CD4-positive, alpha-beta memory T cell (primary cell): ENCODE measurements at regions of chr17 and their contacts with region 1.

Region 1: GRCh38 chr17:57243171-57243948 is 13.0 kb upstream of the MSI2 start:
- DNase-seq: peak; percentile 71 to 75 (median 72)
- H3K4me3 ChIP-seq: no peak overlapping the region
- H3K4me3 Mint-ChIP-seq: no peak overlapping the region
- H3K27ac ChIP-seq: no peak overlapping the region
- H3K27ac Mint-ChIP-seq: peak overlapping the region in 1 of 7 donors; percentile 51
- H3K4me1 ChIP-seq: peaks cover 3% of the 10 kb centered on the region
- H3K4me1 Mint-ChIP-seq: peaks cover 0 to 7% (median 0%) of the 10 kb centered on the region in 4 donors
- H3K27me3 ChIP-seq: no peaks in the 10 kb centered on the region
- H3K27me3 Mint-ChIP-seq: peaks cover 3 to 7% of the 10 kb centered on the region in 2 donors

Region 2: GRCh38 chr17:57228911-57229310 is 14.4 kb before region 1 on chr17:
- CTCF ChIA-PET with region 1: interaction called, 11 read pairs
- POLR2A ChIA-PET with region 1: no interaction called
- intact Hi-C with region 1: no loop called
- DNase-seq: no peak
- H3K4me3 ChIP-seq: no peak overlapping the region
- H3K4me3 Mint-ChIP-seq: no peak overlapping the region
- H3K27ac ChIP-seq: no peak overlapping the region
- H3K27ac Mint-ChIP-seq: no peak overlapping the region
- H3K4me1 ChIP-seq: no peaks in the 10 kb centered on the region
- H3K4me1 Mint-ChIP-seq: no peaks in the 10 kb centered on the region
- H3K27me3 ChIP-seq: no peaks in the 10 kb centered on the region
- H3K27me3 Mint-ChIP-seq: peaks cover 11 to 16% of the 10 kb centered on the region in 2 donors

Region 3: GRCh38 chr17:57284984-57285646 is 41.8 kb after region 1 on chr17:
- CTCF ChIA-PET with region 1: interaction called, 31 read pairs
- POLR2A ChIA-PET with region 1: no interaction called
- intact Hi-C with region 1: loop called (anchors 10 kb)
- DNase-seq: peak; percentile 16 to 68 (median 28)
- H3K4me3 ChIP-seq: peak overlapping the region in 1 of 2 donors; percentile 3
- H3K4me3 Mint-ChIP-seq: peak overlapping the region; percentile 53 to 85 (median 74)
- H3K27ac ChIP-seq: peak overlapping the region; percentile 38
- H3K27ac Mint-ChIP-seq: peak overlapping the region; percentile 66 to 95 (median 90)
- H3K4me1 ChIP-seq: peaks cover 60% of the 10 kb centered on the region
- H3K4me1 Mint-ChIP-seq: peaks cover 50 to 81% (median 65%) of the 10 kb centered on the region in 4 donors
- H3K27me3 ChIP-seq: no peaks in the 10 kb centered on the region
- H3K27me3 Mint-ChIP-seq: no peaks in the 10 kb centered on the region

Region 4: GRCh38 chr17:57518587-57519581 is 275.5 kb after region 1 on chr17:
- CTCF ChIA-PET with region 1: interaction called, 4 read pairs
- POLR2A ChIA-PET with region 1: no interaction called
- intact Hi-C with region 1: loop called (anchors 10 kb)
- DNase-seq: no peak
- H3K4me3 ChIP-seq: no peak overlapping the region
- H3K4me3 Mint-ChIP-seq: no peak overlapping the region
- H3K27ac ChIP-seq: no peak overlapping the region
- H3K27ac Mint-ChIP-seq: no peak overlapping the region
- H3K4me1 ChIP-seq: no peaks in the 10 kb centered on the region
- H3K4me1 Mint-ChIP-seq: peaks cover 6 to 19% (median 15%) of the 10 kb centered on the region in 4 donors
- H3K27me3 ChIP-seq: no peaks in the 10 kb centered on the region
- H3K27me3 Mint-ChIP-seq: no peaks in the 10 kb centered on the region

Region 5: GRCh38 chr17:57747221-57748017 is 504.1 kb after region 1 on chr17:
- CTCF ChIA-PET with region 1: interaction called, 48 read pairs
- POLR2A ChIA-PET with region 1: no interaction called
- intact Hi-C with region 1: loop called (anchors 1 kb)
- DNase-seq: peak; percentile 45 to 57 (median 49)
- H3K4me3 ChIP-seq: no peak overlapping the region
- H3K4me3 Mint-ChIP-seq: no peak overlapping the region
- H3K27ac ChIP-seq: no peak overlapping the region
- H3K27ac Mint-ChIP-seq: peak overlapping the region in 1 of 7 donors; percentile 37
- H3K4me1 ChIP-seq: no peaks in the 10 kb centered on the region
- H3K4me1 Mint-ChIP-seq: peaks cover 0 to 1% (median 0%) of the 10 kb centered on the region in 4 donors
- H3K27me3 ChIP-seq: no peaks in the 10 kb centered on the region
- H3K27me3 Mint-ChIP-seq: peaks cover 3 to 9% of the 10 kb centered on the region in 2 donors

Region 6: GRCh38 chr17:58112970-58113631 is 869.7 kb after region 1 on chr17:
- CTCF ChIA-PET with region 1: interaction called, 6 read pairs
- POLR2A ChIA-PET with region 1: no interaction called
- intact Hi-C with region 1: loop called (anchors 2 kb)
- DNase-seq: peak; percentile 77 to 81 (median 79)
- H3K4me3 ChIP-seq: no peak overlapping the region
- H3K4me3 Mint-ChIP-seq: no peak overlapping the region
- H3K27ac ChIP-seq: no peak overlapping the region
- H3K27ac Mint-ChIP-seq: peak overlapping the region in 2 of 7 donors; percentile 14 to 69
- H3K4me1 ChIP-seq: no peaks in the 10 kb centered on the region
- H3K4me1 Mint-ChIP-seq: peaks cover 0 to 4% (median 2%) of the 10 kb centered on the region in 4 donors
- H3K27me3 ChIP-seq: no peaks in the 10 kb centered on the region
- H3K27me3 Mint-ChIP-seq: peaks cover 3 to 8% of the 10 kb centered on the region in 2 donors